B cell (primary cell): ENCODE measurements at regions of chr6 and their contacts with region 1.

Region 1: GRCh38 chr6:71288228-71289001 is at the start of gene OGFRL1:
- DNase-seq: peak; percentile 88
- ATAC-seq: peak; percentile 78
- H3K4me3 ChIP-seq: peak within 1 kb of the TSS; percentile 66 to 82 (median 76)
- H3K4me3 Mint-ChIP-seq: peak within 1 kb of the TSS; percentile 93
- H3K27ac ChIP-seq: peak within 1 kb of the TSS; percentile 95
- H3K27ac Mint-ChIP-seq: peak within 1 kb of the TSS; percentile 97
- H3K4me1 ChIP-seq: peaks cover 39 to 40% of the 10 kb centered on the region in 2 donors
- H3K4me1 Mint-ChIP-seq: peaks cover 45% of the 10 kb centered on the region
- H3K27me3 ChIP-seq: no peaks in the 10 kb centered on the region
- H3K27me3 Mint-ChIP-seq: no peaks in the 10 kb centered on the region
- CTCF ChIP-seq: no peak
- total RNA-seq, gene OGFRL1: 31.6 and 33.7 TPM in 2 replicates

Region 2: GRCh38 chr6:69796642-69797390 is 1491.6 kb before region 1 on chr6 and contains the start of gene LMBRD1:
- CTCF ChIA-PET with region 1: no interaction called
- POLR2A ChIA-PET with region 1: no interaction called
- intact Hi-C with region 1: loop called (anchors 5 kb)
- DNase-seq: peak; percentile 99
- ATAC-seq: peak; percentile 84
- H3K4me3 ChIP-seq: peak within 1 kb of the TSS; percentile 81 to 97 (median 85)
- H3K4me3 Mint-ChIP-seq: peak within 1 kb of the TSS; percentile 93
- H3K27ac ChIP-seq: peak within 1 kb of the TSS; percentile 90 to 99
- H3K27ac Mint-ChIP-seq: peak within 1 kb of the TSS; percentile 96
- H3K4me1 ChIP-seq: peaks cover 39 to 40% of the 10 kb centered on the region in 2 donors
- H3K4me1 Mint-ChIP-seq: peaks cover 46% of the 10 kb centered on the region
- H3K27me3 ChIP-seq: no peaks in the 10 kb centered on the region
- H3K27me3 Mint-ChIP-seq: no peaks in the 10 kb centered on the region
- CTCF ChIP-seq: peak; percentile 95
- total RNA-seq, gene LMBRD1: 94.0 and 99.0 TPM in 2 replicates

Region 3: GRCh38 chr6:70566751-70567382 is 721.5 kb before region 1 on chr6 and contains the start of gene SDHAF4:
- CTCF ChIA-PET with region 1: no interaction called
- POLR2A ChIA-PET with region 1: no interaction called
- intact Hi-C with region 1: loop called (anchors 10 kb)
- DNase-seq: peak; percentile 94
- ATAC-seq: peak; percentile 99
- H3K4me3 ChIP-seq: peak within 1 kb of the TSS; percentile 72 to 91 (median 83)
- H3K4me3 Mint-ChIP-seq: peak within 1 kb of the TSS; percentile 93
- H3K27ac ChIP-seq: peak within 1 kb of the TSS; percentile 73 to 84
- H3K27ac Mint-ChIP-seq: peak within 1 kb of the TSS; percentile 83
- H3K4me1 ChIP-seq: peaks cover 5 to 12% of the 10 kb centered on the region in 2 donors
- H3K4me1 Mint-ChIP-seq: peaks cover 19% of the 10 kb centered on the region
- H3K27me3 ChIP-seq: no peaks in the 10 kb centered on the region
- H3K27me3 Mint-ChIP-seq: no peaks in the 10 kb centered on the region
- CTCF ChIP-seq: no peak
- total RNA-seq, gene SDHAF4: 9.1 and 15.4 TPM in 2 replicates

Region 4: DNA sequence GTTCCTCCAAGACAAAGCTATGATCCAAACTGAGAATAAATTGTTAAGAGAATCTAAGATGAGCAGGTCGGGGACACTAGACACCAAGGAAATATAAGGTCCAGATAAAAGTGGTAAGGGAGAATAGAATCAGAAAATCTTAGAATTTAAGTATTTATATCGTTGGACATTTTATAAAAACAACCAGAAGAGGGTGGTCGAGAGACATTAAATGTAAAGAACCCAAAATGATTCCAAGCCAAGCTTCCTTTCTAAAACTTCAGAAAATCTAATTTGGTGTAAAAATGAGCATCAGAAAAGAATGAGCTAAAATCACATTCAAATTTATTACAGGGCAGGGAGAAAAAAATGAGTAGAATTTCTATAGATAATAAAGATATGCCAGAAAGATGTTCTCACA is 97.6 kb before region 1 on chr6:
- CTCF ChIA-PET with region 1: interaction called, 66 read pairs
- POLR2A ChIA-PET with region 1: interaction called, 4 read pairs
- intact Hi-C with region 1: loop called (anchors 1 kb)
- DNase-seq: peak; percentile 56
- ATAC-seq: no peak
- H3K4me3 ChIP-seq: no peak overlapping the region
- H3K4me3 Mint-ChIP-seq: no peak overlapping the region
- H3K27ac ChIP-seq: no peak overlapping the region
- H3K27ac Mint-ChIP-seq: no peak overlapping the region
- H3K4me1 ChIP-seq: no peaks in the 10 kb centered on the region
- H3K4me1 Mint-ChIP-seq: no peaks in the 10 kb centered on the region
- H3K27me3 ChIP-seq: no peaks in the 10 kb centered on the region
- H3K27me3 Mint-ChIP-seq: peaks cover 16% of the 10 kb centered on the region
- CTCF ChIP-seq: peak; percentile 78

Region 5: DNA sequence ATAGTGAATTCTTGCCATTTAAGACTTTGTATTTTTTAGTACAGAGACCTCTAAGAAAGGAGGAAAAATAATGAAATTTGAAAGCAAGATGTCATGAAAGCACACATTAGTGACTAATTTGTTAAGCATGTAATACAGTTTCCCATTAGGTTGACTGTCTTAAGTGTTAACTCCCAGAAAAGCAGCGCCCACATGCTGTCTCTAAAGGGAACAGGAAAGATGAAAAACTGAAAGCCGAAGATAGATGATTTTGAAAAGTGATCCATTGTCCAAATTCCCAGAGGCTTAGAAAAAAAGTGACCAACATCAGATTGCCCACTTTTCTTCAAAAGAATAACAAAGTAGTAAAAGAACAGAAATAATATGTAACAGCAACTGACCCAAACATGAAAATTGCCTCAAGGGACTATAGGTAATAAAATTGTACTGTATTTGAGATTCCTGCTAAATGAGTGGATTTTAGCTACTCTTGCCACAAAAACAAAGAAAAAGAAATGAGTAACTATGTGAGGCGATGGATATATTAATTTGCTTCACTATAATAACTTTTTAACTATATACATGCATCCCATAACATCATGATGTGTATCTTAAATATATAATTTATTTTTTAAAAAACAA is 83.0 kb before region 1 on chr6:
- CTCF ChIA-PET with region 1: no interaction called
- POLR2A ChIA-PET with region 1: no interaction called
- intact Hi-C with region 1: no loop called
- DNase-seq: no peak
- ATAC-seq: no peak
- H3K4me3 ChIP-seq: no peak overlapping the region
- H3K4me3 Mint-ChIP-seq: no peak overlapping the region
- H3K27ac ChIP-seq: no peak overlapping the region
- H3K27ac Mint-ChIP-seq: no peak overlapping the region
- H3K4me1 ChIP-seq: no peaks in the 10 kb centered on the region
- H3K4me1 Mint-ChIP-seq: no peaks in the 10 kb centered on the region
- H3K27me3 ChIP-seq: no peaks in the 10 kb centered on the region
- H3K27me3 Mint-ChIP-seq: peaks cover 8% of the 10 kb centered on the region
- CTCF ChIP-seq: no peak

Region 6: DNA sequence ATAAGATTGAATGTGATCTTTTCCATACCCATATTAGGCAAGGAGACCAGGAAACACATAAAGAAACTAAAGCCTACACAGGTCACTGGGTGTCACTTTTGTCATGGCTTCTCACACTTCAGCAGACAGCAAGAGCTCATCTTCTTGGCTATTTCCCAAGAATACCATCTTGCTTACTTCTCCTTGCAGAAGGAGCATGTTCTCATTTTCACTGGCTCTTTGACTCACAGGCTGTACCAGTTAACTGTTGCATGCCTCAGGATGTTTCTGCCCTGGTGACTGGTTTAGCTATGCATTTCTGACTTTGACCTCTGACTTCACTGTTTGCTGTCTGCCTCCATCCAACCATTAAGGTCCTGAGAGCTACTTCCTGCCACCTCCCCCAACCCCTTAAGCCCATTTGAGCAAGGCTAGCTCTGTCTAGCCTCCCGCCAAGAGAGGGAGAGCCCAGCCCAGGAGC is 40.1 kb before region 1 on chr6:
- CTCF ChIA-PET with region 1: interaction called, 7 read pairs
- POLR2A ChIA-PET with region 1: interaction called, 12 read pairs
- intact Hi-C with region 1: loop called (anchors 1 kb)
- DNase-seq: peak; percentile 35
- ATAC-seq: peak; percentile 62
- H3K4me3 ChIP-seq: no peak overlapping the region
- H3K4me3 Mint-ChIP-seq: peak overlapping the region; percentile 17
- H3K27ac ChIP-seq: peak overlapping the region in 1 of 2 donors; percentile 50
- H3K27ac Mint-ChIP-seq: peak overlapping the region; percentile 59
- H3K4me1 ChIP-seq: peaks cover 26 to 50% of the 10 kb centered on the region in 2 donors
- H3K4me1 Mint-ChIP-seq: peaks cover 53% of the 10 kb centered on the region
- H3K27me3 ChIP-seq: no peaks in the 10 kb centered on the region
- H3K27me3 Mint-ChIP-seq: no peaks in the 10 kb centered on the region
- CTCF ChIP-seq: no peak

Region 7: GRCh38 chr6:71349395-71349794 is 61.0 kb after region 1 on chr6:
- CTCF ChIA-PET with region 1: interaction called, 12 read pairs
- POLR2A ChIA-PET with region 1: no interaction called
- intact Hi-C with region 1: loop called (anchors 2 kb)
- DNase-seq: peak; percentile 57
- ATAC-seq: peak; percentile 47
- H3K4me3 ChIP-seq: no peak overlapping the region
- H3K4me3 Mint-ChIP-seq: no peak overlapping the region
- H3K27ac ChIP-seq: no peak overlapping the region
- H3K27ac Mint-ChIP-seq: no peak overlapping the region
- H3K4me1 ChIP-seq: peaks cover 5 to 9% of the 10 kb centered on the region in 2 donors
- H3K4me1 Mint-ChIP-seq: peaks cover 10% of the 10 kb centered on the region
- H3K27me3 ChIP-seq: no peaks in the 10 kb centered on the region
- H3K27me3 Mint-ChIP-seq: peaks cover 1% of the 10 kb centered on the region
- CTCF ChIP-seq: peak; percentile 94